ENCODE measurements at regions of chr14 and their contacts with region 1.

Region 1: GRCh38 chr14:22653012-22653621 is 9.0 kb upstream of the OR6J1 start:
- DNase-seq: peak in 1 of 2 donors; percentile 63
- H3K4me3 ChIP-seq: no peak overlapping the region
- CTCF ChIP-seq: no peak
- POLR2A ChIP-seq: no peak

Region 2: GRCh38 chr14:22570132-22570949 is 82.8 kb before region 1 on chr14:
- intact Hi-C with region 1: loop called (anchors 5 kb)
- DNase-seq: peak in 1 of 2 donors; percentile 84
- H3K4me3 ChIP-seq: no peak overlapping the region
- CTCF ChIP-seq: peak in 1 of 3 donors; percentile 88
- POLR2A ChIP-seq: no peak